ENCODE measurements at regions of chr22 and their contacts with region 1.

Region 1: DNA sequence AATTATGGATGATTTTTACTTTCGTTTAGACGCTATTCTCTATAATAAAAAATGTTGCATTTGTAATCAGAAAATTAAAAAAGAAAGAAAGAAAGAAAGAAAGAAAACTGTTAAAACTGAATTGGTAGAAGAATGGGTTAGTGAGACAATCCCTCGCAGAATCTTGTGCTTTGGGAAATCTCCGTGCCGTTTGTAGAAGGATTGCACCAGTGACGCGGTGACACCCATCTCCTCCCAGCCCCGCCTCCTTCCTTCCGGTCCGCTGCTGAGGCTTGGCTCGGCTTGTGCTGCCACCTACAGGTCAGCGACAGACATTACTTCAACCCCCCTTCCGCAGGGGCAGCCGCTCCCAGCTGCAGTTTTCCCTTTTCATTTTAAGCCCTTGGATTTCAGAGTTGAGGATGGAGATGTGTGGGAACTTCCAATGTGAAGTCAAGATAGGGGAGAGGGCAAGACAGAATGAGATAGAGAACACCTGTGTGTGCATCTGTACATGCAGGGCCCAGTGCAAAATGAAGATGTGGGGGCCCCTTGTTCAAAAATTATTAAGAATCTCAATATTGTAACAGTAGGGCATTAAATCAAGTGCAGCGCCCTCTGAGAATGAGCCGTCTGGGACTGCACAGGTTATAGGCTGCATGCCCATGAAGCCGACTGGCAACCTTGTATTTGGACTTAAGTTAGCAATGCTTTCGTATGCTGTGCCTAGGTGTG is 41.1 kb downstream of the TST start:
- DNase-seq: peak; percentile 86 to 89 (median 88)
- H3K4me3 ChIP-seq: peak overlapping the region; percentile 41 to 67
- H3K4me3 Mint-ChIP-seq: peak overlapping the region; percentile 88 to 98 (median 96)
- H3K27ac ChIP-seq: peak overlapping the region; percentile 59
- H3K27ac Mint-ChIP-seq: peak overlapping the region; percentile 82 to 99 (median 96)
- H3K4me1 ChIP-seq: peaks cover 4% of the 10 kb centered on the region
- H3K4me1 Mint-ChIP-seq: peaks cover 3 to 14% (median 8%) of the 10 kb centered on the region in 4 donors
- H3K27me3 ChIP-seq: no peaks in the 10 kb centered on the region
- H3K27me3 Mint-ChIP-seq: peaks cover 3 to 5% of the 10 kb centered on the region in 2 donors

Region 2: DNA sequence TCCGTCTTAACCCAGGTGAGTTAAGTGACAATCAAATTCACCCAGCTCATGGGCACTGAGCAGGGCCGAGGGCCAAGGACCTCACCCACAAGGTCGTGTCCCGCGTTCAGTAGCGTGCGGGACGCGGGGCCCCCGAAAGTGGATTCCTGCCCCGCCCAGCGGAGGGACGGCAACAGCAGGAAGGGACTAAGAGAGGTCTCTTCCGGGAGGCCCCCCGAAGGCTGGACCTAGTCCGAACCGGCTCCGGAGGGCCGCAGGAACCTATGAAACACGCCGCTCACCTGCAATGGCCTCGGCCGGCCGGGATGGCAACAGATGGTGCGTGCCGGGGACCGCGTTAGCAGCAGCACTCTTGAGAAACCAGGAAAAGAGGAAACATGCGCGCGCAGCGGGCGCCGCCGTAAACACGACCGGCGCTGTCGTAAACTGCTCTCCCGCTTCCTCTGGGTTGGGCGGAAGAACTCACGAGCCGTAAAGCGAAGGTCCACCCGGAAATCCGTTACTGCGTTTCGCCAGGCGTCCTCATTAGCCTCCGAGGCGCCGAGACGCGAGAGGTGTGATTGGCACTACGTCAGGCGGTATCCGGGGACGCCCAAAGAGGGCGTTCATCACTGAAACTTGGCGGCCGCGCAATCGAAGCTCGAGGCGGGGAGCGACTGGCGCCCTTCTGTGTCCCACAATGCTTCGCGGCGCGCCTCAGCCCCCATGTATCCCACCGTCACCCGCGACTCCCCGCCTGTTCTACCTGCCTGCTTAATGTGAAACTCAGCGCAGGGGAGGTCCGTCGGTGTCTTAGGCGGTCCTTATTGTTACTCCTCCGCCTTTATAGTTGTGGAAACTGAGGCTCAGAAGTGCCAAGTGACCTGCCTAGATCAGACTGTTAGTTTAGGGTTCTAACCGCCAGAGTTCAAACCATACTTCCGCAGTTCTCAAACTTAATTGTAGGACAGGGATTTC is 449.0 kb before region 1 on chr22 and contains the start of gene EIF3D:
- CTCF ChIA-PET with region 1: no interaction called
- POLR2A ChIA-PET with region 1: interaction called, 5 read pairs
- intact Hi-C with region 1: loop called (anchors 5 kb)
- DNase-seq: peak; percentile 98 to 100 (median 99)
- H3K4me3 ChIP-seq: peak within 1 kb of the TSS; percentile 79 to 94
- H3K4me3 Mint-ChIP-seq: peak within 1 kb of the TSS; percentile 89 to 97 (median 95)
- H3K27ac ChIP-seq: peak within 1 kb of the TSS; percentile 87
- H3K27ac Mint-ChIP-seq: peak within 1 kb of the TSS; percentile 95 to 99 (median 99)
- H3K4me1 ChIP-seq: peaks cover 20% of the 10 kb centered on the region
- H3K4me1 Mint-ChIP-seq: peaks cover 11 to 30% (median 16%) of the 10 kb centered on the region in 4 donors
- H3K27me3 ChIP-seq: no peaks in the 10 kb centered on the region
- H3K27me3 Mint-ChIP-seq: peaks cover 1% of the 10 kb centered on the region in 2 donors
- total RNA-seq, gene EIF3D: 222 to 228 TPM

Region 3: DNA sequence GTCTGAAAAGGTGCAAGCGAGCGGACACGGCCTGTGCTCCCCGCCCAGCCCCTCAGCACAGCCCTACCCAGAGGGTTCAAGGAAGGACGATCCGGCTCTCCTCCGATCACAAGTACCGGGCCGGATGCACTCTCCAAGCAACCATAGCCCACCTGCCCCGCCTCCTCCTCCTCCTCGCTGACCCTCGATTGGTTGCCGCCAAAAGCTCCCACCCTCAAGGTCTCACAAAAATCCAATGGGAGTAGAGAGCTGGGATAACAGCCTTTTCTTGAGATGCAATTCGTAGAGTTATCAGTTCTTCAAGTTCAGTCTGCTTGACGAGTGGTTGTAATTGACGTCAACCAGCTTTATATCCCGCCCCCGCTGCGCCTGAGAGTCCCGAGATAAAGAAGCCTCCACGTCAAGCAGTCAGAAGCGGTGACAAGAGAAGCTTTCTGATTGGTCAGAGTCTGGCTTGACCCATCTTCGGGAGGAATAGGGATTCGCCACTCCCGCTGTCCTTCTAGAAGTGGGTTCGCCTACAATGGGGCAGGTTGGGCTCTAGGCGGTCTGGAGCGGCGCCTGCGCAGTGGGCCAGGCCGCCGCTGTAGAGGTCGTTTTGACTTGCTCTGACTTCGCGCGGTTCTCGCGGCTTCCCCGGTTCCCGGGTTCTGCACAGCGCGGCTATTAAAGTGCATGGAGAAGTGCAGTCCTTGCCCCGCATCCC is 202.0 kb before region 1 on chr22 and contains the start of gene IFT27:
- CTCF ChIA-PET with region 1: interaction called, 42 read pairs
- POLR2A ChIA-PET with region 1: interaction called, 19 read pairs
- intact Hi-C with region 1: loop called (anchors 1 kb)
- DNase-seq: peak; percentile 96 to 100 (median 99)
- H3K4me3 ChIP-seq: peak within 1 kb of the TSS; percentile 51 to 64
- H3K4me3 Mint-ChIP-seq: peak within 1 kb of the TSS; percentile 89 to 97 (median 92)
- H3K27ac ChIP-seq: peak within 1 kb of the TSS; percentile 73
- H3K27ac Mint-ChIP-seq: peak within 1 kb of the TSS; percentile 93 to 99 (median 98)
- H3K4me1 ChIP-seq: peaks cover 17% of the 10 kb centered on the region
- H3K4me1 Mint-ChIP-seq: peaks cover 16 to 32% (median 24%) of the 10 kb centered on the region in 4 donors
- H3K27me3 ChIP-seq: no peaks in the 10 kb centered on the region
- H3K27me3 Mint-ChIP-seq: no peaks in the 10 kb centered on the region
- total RNA-seq, gene IFT27: 38.2 to 42.6 TPM

Region 4: DNA sequence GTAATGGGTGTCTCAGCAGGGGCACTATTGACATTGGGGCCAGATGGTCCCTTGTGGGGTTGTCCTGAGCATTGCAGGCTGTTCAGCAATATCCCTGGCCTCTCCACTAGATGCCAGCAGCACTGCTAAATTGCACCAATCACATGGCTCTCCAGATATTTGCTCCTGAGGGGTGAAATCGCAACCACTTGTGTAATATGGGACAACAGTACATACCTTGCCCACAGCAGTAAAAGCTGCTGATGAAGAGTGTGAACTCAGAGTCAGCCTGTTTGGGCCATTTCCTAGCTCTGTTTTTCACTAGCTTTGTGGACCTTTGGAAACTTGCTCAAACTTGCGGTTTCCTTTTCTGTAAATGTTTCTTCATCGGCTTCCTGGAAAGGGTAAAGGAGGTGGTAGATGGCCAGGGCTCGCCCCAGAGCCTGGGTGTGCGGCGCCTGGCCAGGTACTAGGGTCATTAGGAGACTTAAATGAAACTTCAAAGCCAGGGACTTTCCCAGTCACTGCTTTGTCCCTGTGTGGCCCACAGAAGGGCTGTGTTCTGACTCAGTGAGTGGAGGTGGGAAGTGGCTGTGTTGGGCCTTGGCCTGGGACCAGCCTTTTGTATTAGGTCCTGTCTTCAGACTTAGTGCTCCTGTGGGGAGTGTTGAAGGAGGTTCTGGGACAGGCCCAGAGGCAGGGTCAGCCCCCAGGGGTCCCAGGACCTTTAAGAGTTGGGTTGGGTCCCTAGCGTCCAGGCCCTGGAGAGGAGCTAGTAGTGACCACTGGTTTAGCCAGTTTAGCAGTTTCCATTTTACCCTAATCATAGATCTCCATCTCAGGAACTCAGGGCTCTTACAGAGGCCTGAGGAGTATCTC is 104.2 kb before region 1 on chr22:
- CTCF ChIA-PET with region 1: interaction called, 22 read pairs
- POLR2A ChIA-PET with region 1: no interaction called
- intact Hi-C with region 1: loop called (anchors 1 kb)
- DNase-seq: peak in 2 of 5 donors; percentile 25 to 34
- H3K4me3 ChIP-seq: no peak overlapping the region
- H3K4me3 Mint-ChIP-seq: peak overlapping the region in 7 of 8 donors; percentile 23 to 54 (median 42)
- H3K27ac ChIP-seq: peak overlapping the region; percentile 27
- H3K27ac Mint-ChIP-seq: peak overlapping the region; percentile 81 to 91 (median 87)
- H3K4me1 ChIP-seq: peaks cover 19% of the 10 kb centered on the region
- H3K4me1 Mint-ChIP-seq: peaks cover 10 to 15% (median 13%) of the 10 kb centered on the region in 4 donors
- H3K27me3 ChIP-seq: no peaks in the 10 kb centered on the region
- H3K27me3 Mint-ChIP-seq: no peaks in the 10 kb centered on the region

Region 5: DNA sequence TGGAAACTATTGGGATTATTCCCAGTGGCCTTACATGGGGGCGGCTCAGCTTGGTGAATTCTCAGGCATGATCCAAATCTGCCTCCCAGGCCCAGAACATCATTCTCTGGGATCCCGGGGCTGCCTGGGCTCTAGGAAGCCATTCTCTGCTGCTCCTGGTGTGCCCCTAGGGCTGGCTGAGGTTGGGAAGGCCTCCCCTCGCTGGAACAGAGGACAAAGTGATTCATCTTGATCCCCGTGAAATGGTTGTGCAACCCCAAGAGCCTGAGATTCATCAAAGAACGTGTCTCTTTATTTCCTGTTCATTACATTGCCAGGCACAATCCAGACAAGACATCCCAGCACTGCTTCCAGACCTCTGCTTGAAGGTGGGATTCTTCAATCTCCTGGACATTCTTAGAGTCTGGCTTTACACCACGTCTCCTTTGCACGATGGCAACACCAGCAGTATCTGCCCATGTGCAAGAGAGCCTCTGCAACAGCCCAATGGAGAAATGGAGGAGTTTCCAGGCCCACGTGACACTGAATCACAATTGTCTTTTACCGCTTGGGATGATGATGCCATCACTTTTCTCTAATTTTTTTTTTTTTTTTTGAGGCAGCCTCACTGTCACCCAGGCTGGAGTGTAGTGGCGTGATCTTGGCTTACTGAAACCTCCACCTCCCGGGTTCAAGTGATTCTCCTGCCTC is 11.1 kb before region 1 on chr22:
- CTCF ChIA-PET with region 1: interaction called, 30 read pairs
- POLR2A ChIA-PET with region 1: interaction called, 3 read pairs
- intact Hi-C with region 1: no loop called
- DNase-seq: no peak
- H3K4me3 ChIP-seq: no peak overlapping the region
- H3K4me3 Mint-ChIP-seq: no peak overlapping the region
- H3K27ac ChIP-seq: no peak overlapping the region
- H3K27ac Mint-ChIP-seq: no peak overlapping the region
- H3K4me1 ChIP-seq: no peaks in the 10 kb centered on the region
- H3K4me1 Mint-ChIP-seq: no peaks in the 10 kb centered on the region
- H3K27me3 ChIP-seq: no peaks in the 10 kb centered on the region
- H3K27me3 Mint-ChIP-seq: peaks cover 0 to 5% of the 10 kb centered on the region in 2 donors